Activated naive CD4-positive, alpha-beta T cell treated with anti-CD3 and anti-CD28 coated beads for 36 hours (primary cell): ENCODE measurements at regions of chr6 and their contacts with region 1.

Region 1: DNA sequence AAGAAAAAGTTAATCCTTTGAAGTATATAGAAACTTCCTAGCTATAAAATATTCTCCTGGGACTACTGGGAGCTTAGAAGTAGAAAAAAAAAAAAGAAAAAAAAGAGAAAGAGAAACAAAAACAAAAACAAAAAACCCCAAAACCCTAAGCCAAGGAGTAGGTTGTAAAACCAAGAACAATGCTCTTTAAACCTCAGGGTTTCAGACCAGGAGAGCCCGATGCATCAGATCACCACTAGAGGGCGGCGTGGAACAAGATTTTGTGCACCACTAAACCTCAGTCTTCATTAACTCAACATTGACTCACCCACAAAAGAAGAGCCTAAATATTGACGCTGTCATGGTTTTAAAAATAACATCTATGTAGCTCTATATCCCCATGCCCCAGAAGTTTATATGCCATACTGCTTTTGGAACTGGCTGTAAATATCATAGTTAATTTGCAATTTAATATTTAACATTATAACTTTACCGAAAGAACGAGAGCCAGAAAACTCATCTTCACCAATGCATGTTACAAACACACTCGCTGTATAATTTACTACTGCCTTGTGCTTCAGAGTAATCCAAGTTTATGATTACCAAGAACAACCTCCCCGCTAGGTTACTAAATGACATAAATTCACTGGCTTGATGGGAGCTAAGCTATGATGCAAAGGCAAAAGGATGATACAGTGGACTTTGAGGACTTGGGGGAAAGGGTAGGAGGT is 19.2 kb downstream of the MCUR1 start:
- DNase-seq: peak; percentile 97
- H3K4me3 Mint-ChIP-seq: no peak overlapping the region
- H3K27ac Mint-ChIP-seq: no peak overlapping the region
- H3K4me1 Mint-ChIP-seq: peaks cover 14% of the 10 kb centered on the region
- H3K27me3 Mint-ChIP-seq: no peaks in the 10 kb centered on the region

Region 2: DNA sequence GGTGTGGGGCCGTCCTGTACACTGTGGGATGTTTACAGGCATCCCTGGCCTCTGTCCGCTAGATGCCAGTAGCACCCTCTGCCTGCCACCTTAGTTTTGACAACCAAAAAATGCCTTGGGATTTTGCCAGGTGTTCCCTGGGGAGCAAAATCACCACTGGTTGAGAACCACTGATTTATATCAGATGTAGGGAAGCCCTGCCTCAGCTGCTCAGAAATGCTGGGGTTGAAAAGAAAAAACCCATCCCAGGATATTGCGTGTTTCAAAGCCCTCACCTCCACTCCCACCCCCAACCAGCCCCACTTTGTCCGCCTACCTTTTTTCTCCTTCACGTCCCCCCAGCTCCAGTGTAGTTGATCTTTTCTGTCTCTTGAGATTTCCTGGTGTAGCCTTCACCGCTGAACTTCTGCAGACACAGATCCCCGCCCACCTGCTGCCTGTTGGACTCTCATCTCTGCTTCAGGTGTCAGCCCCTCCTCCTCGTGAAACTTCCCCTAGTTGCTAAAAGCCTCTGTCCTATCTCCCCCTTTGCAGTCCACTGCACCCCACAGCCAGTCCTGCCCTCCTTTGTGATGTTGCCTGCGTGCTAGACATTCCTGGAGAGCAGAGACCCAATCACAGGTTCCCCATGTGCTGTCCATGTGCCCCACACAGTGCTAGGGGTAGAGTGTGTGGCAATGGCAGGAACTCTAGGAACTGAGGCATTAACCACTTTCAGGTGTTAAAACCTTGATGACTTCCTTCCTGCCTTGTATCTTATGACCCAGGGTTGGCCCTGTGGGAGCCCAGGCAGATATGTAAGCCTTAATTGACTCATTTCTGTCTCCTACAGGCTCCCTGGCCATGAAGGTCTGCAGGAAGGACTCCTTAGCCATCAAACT is 565.8 kb before region 1 on chr6:
- CTCF ChIA-PET with region 1: no interaction called
- intact Hi-C with region 1: no loop called
- DNase-seq: peak; percentile 31
- H3K4me3 Mint-ChIP-seq: no peak overlapping the region
- H3K27ac Mint-ChIP-seq: no peak overlapping the region
- H3K4me1 Mint-ChIP-seq: peaks cover 10% of the 10 kb centered on the region
- H3K27me3 Mint-ChIP-seq: peaks cover 2% of the 10 kb centered on the region

Region 3: GRCh38 chr6:13859871-13860555 is 64.8 kb after region 1 on chr6:
- CTCF ChIA-PET with region 1: interaction called, 4 read pairs
- intact Hi-C with region 1: loop called (anchors 1 kb)
- DNase-seq: no peak
- H3K4me3 Mint-ChIP-seq: peak overlapping the region; percentile 30
- H3K27ac Mint-ChIP-seq: no peak overlapping the region
- H3K4me1 Mint-ChIP-seq: peaks cover 3% of the 10 kb centered on the region
- H3K27me3 Mint-ChIP-seq: peaks cover 32% of the 10 kb centered on the region

Region 4: GRCh38 chr6:13873285-13874190 is 78.3 kb after region 1 on chr6:
- CTCF ChIA-PET with region 1: interaction called, 6 read pairs
- intact Hi-C with region 1: loop called (anchors 1 kb)
- DNase-seq: peak; percentile 77
- H3K4me3 Mint-ChIP-seq: peak overlapping the region; percentile 74
- H3K27ac Mint-ChIP-seq: no peak overlapping the region
- H3K4me1 Mint-ChIP-seq: peaks cover 6% of the 10 kb centered on the region
- H3K27me3 Mint-ChIP-seq: peaks cover 5% of the 10 kb centered on the region

Region 5: GRCh38 chr6:13908955-13909381 is 113.8 kb after region 1 on chr6:
- CTCF ChIA-PET with region 1: interaction called, 4 read pairs
- intact Hi-C with region 1: loop called (anchors 2 kb)
- DNase-seq: peak; percentile 62
- H3K4me3 Mint-ChIP-seq: no peak overlapping the region
- H3K27ac Mint-ChIP-seq: no peak overlapping the region
- H3K4me1 Mint-ChIP-seq: peaks cover 2% of the 10 kb centered on the region
- H3K27me3 Mint-ChIP-seq: peaks cover 26% of the 10 kb centered on the region

Region 6: GRCh38 chr6:13924146-13924948 is 129.2 kb after region 1 on chr6:
- CTCF ChIA-PET with region 1: no interaction called
- intact Hi-C with region 1: no loop called
- DNase-seq: peak; percentile 53
- H3K4me3 Mint-ChIP-seq: peak overlapping the region; percentile 73
- H3K27ac Mint-ChIP-seq: no peak overlapping the region
- H3K4me1 Mint-ChIP-seq: peaks cover 14% of the 10 kb centered on the region
- H3K27me3 Mint-ChIP-seq: peaks cover 51% of the 10 kb centered on the region

Region 7: GRCh38 chr6:14046476-14047068 is 251.4 kb after region 1 on chr6:
- CTCF ChIA-PET with region 1: interaction called, 5 read pairs
- intact Hi-C with region 1: loop called (anchors 1 kb)
- DNase-seq: peak; percentile 62
- H3K4me3 Mint-ChIP-seq: no peak overlapping the region
- H3K27ac Mint-ChIP-seq: no peak overlapping the region
- H3K4me1 Mint-ChIP-seq: no peaks in the 10 kb centered on the region
- H3K27me3 Mint-ChIP-seq: peaks cover 18% of the 10 kb centered on the region